ENCODE measurements at regions of chr1 and their contacts with region 1.

Region 1: GRCh38 chr1:206982216-206982615 is 12.0 kb upstream of the FCAMR start:
- DNase-seq: peak; percentile 92
- ATAC-seq: peak; percentile 95
- H3K4me3 ChIP-seq: no peak overlapping the region
- H3K27ac ChIP-seq: no peak overlapping the region
- H3K4me1 ChIP-seq: no peaks in the 10 kb centered on the region; the same call in 1 of the 2 replicates
- H3K27me3 ChIP-seq: no peaks in the 10 kb centered on the region
- CTCF ChIP-seq: peak; percentile 99

Region 2: GRCh38 chr1:206725109-206725963 is 256.9 kb before region 1 on chr1:
- CTCF ChIA-PET with region 1: interaction called, 3 read pairs
- POLR2A ChIA-PET with region 1: no interaction called
- intact Hi-C with region 1: loop called (anchors 1 kb)
- DNase-seq: peak; percentile 69
- ATAC-seq: peak; percentile 47
- H3K4me3 ChIP-seq: no peak overlapping the region
- H3K27ac ChIP-seq: no peak overlapping the region; the same call in 1 of the 2 replicates
- H3K4me1 ChIP-seq: peaks cover 29% of the 10 kb centered on the region
- H3K27me3 ChIP-seq: no peaks in the 10 kb centered on the region
- CTCF ChIP-seq: peak; percentile 89

Region 3: DNA sequence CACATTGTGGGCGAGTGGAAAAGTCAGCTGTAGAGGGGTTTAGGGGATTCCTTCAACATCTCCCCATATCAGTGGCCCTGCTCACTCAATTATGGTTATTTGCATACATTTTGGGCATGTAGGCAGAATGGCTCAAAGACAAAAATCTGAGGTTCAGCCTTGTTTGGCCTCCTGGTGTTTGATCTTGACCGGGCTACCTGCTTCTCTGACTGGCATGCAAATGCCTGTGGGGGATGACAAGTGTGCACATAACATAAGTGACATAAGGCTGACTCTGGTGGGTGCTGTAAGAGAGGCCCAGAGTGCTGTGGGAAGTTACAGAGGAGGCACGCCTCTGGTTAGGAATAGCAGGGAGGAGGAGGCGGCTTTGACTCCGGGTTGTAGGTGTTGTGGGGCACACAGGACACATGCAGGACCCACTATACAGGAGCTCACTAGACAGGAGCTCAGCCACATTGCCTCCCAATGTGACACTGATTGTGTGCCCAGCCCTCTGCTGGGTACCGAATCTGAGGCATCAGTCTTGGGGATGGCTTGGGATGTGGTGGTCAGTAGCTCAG is 241.0 kb before region 1 on chr1:
- CTCF ChIA-PET with region 1: no interaction called
- POLR2A ChIA-PET with region 1: no interaction called
- intact Hi-C with region 1: no loop called
- DNase-seq: no peak
- ATAC-seq: no peak
- H3K4me3 ChIP-seq: no peak overlapping the region
- H3K27ac ChIP-seq: no peak overlapping the region
- H3K4me1 ChIP-seq: peaks cover 6% of the 10 kb centered on the region
- H3K27me3 ChIP-seq: no peaks in the 10 kb centered on the region
- CTCF ChIP-seq: no peak

Region 4: GRCh38 chr1:206865013-206865671 is 117.1 kb before region 1 on chr1 and contains the start of gene IL20:
- CTCF ChIA-PET with region 1: interaction called, 3 read pairs
- POLR2A ChIA-PET with region 1: no interaction called
- intact Hi-C with region 1: loop called (anchors 1 kb)
- DNase-seq: peak; percentile 98
- ATAC-seq: peak; percentile 81
- H3K4me3 ChIP-seq: no peak within 1 kb of the TSS
- H3K27ac ChIP-seq: no peak within 1 kb of the TSS
- H3K4me1 ChIP-seq: no peaks in the 10 kb centered on the region
- H3K27me3 ChIP-seq: peaks cover 8% of the 10 kb centered on the region; the same call in 1 of the 2 replicates
- CTCF ChIP-seq: peak; percentile 100
- total RNA-seq, gene IL20: not detected in 2 replicates

Region 5: DNA sequence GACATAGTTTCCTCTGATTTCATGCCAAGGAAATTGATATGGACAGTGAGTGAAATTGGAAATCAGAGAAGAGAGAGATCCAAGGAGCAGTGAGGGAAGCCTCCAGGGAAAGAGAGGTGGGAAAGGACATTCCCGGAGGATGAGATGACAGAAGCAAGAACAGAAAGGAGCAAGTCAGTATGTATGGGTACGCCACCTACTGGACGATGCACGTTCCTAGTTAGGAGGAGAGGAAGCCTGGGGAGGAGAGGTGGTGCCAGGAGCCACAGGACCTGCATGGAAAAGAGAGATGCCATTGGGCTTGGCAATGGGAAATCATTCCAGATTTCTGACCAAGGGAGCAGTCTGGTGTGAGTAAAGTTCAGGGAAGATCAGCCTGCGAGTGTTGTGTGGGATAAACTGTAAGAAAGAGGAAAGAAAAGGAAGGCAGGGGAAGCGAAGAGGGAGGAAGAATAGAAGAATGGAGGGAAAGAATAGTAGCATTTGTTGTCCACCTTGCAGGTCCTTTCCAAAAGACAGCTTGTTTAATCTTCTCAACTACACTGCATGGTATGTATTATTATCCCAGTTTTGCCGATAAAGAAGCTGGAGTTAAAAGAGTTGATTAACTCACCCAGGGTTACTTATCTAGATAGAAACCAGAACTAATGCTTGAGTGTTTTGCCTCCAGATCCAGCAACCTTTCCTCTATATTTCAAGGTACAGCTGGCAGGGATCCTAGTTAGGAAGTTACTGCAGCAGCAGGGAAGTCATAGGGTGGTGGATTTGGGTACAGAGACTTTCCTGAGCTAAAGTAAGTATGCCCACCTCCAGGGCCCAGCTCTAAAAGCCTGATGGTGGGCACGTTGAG is 23.0 kb after region 1 on chr1:
- CTCF ChIA-PET with region 1: interaction called, 6 read pairs
- POLR2A ChIA-PET with region 1: interaction called, 6 read pairs
- intact Hi-C with region 1: loop called (anchors 1 kb)
- DNase-seq: peak; percentile 97
- ATAC-seq: peak; percentile 33
- H3K4me3 ChIP-seq: no peak overlapping the region
- H3K27ac ChIP-seq: peak overlapping the region; percentile 92
- H3K4me1 ChIP-seq: peaks cover 82% of the 10 kb centered on the region
- H3K27me3 ChIP-seq: no peaks in the 10 kb centered on the region
- CTCF ChIP-seq: peak; percentile 98

Region 6: GRCh38 chr1:207052911-207053769 is 70.9 kb after region 1 on chr1 and contains the start of gene PFKFB2:
- CTCF ChIA-PET with region 1: interaction called, 7 read pairs
- POLR2A ChIA-PET with region 1: no interaction called
- intact Hi-C with region 1: loop called (anchors 2 kb)
- DNase-seq: peak; percentile 100
- ATAC-seq: peak; percentile 81
- H3K4me3 ChIP-seq: peak within 1 kb of the TSS; percentile 78
- H3K27ac ChIP-seq: peak within 1 kb of the TSS; percentile 95
- H3K4me1 ChIP-seq: peaks cover 55% of the 10 kb centered on the region
- H3K27me3 ChIP-seq: no peaks in the 10 kb centered on the region
- CTCF ChIP-seq: peak; percentile 35; the same call in 1 of the 2 replicates
- total RNA-seq, gene PFKFB2: 37.5 and 48.6 TPM in 2 replicates

Region 7: GRCh38 chr1:207145401-207146058 is 163.3 kb after region 1 on chr1:
- CTCF ChIA-PET with region 1: no interaction called
- POLR2A ChIA-PET with region 1: no interaction called
- intact Hi-C with region 1: no loop called
- DNase-seq: no peak
- ATAC-seq: no peak
- H3K4me3 ChIP-seq: no peak overlapping the region
- H3K27ac ChIP-seq: no peak overlapping the region
- H3K4me1 ChIP-seq: no peaks in the 10 kb centered on the region
- H3K27me3 ChIP-seq: no peaks in the 10 kb centered on the region
- CTCF ChIP-seq: no peak

Region 8: DNA sequence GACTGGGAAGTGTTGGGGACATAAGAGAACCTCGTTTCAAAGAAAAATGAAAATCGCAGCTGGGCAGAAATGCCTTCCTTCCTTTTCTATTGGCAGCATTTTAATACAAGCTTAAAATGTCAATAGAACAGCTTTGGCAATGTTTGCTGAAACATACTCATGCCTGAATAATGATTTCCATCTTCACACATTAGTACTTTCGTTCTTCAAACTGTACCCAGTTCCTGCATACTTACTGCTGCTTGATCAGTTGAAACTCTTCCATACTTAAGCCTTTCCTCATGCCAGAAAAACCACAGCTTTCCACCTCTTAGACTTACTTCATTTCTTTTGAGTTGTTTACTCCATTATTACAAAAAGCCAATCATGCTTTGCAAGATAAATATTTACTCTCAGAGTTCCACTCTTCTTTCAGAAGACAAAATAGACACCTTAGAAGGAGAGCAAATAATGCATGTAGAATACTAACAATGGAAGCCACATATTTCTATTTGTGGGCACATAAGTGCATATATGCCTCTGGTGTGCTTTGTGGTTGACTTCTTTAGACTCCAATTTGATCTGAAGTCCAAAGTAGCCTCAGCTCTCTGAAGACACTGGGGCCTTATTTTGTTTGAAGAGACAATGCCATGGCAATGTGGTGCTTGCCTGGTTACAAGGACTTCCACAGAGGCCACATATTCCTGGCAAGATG is 316.6 kb after region 1 on chr1:
- CTCF ChIA-PET with region 1: no interaction called
- POLR2A ChIA-PET with region 1: no interaction called
- intact Hi-C with region 1: no loop called
- DNase-seq: peak; percentile 86
- ATAC-seq: peak; percentile 93
- H3K4me3 ChIP-seq: peak overlapping the region; percentile 24; the same call in 1 of the 2 replicates
- H3K27ac ChIP-seq: peak overlapping the region; percentile 57
- H3K4me1 ChIP-seq: peaks cover 28% of the 10 kb centered on the region
- H3K27me3 ChIP-seq: no peaks in the 10 kb centered on the region
- CTCF ChIP-seq: no peak

Measured in PC-3 (cell line).